Activated CD4-positive, alpha-beta memory T cell treated with anti-CD3 and anti-CD28 coated beads, Interleukin-2, amount 10 ng/mL, durations not matched to agents 7 days and 5 days (primary cell): ENCODE measurements at regions of chr11 and their contacts with region 1.

Region 1: DNA sequence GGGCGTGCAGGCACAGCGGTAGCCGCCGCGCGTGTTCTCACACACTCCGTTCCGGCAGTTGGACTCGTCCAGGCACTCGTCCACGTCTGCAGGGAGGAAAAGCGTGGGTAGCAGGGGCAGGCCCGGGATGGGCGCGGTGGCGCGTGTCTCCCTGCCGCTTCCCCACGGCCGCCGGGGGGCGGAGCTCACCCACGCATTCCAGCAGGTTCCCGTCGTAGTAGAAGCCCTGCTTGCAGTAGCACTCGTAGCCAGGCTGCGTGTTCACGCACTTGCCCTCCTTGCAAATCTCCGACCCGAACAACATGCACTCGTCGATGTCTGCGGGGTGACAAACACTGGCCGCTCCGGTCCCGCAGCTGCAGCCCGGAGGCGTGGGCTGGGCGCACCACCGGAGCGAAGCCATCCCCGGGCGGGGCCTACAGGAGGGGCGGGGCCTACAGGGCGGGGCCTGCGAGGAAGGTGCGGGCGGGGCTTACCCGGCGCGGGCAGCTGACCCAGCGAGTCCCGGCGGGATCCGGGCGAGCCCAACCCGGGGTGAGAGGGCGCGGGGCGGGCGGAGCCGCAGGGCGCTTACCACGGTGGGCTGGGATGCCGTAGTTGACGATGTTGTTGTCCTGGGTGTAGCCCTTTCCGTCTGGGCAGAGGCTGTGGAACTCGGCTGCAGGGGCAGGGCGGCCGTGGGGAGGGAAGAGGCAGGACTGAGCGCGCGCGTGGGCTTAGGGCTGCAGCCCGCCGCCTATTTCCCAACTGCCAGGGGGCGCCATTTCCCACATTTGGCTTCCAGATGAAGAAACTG is 15.6 kb downstream of the SCYL1 start:
- DNase-seq: peak; percentile 92
- H3K4me3 Mint-ChIP-seq: peak overlapping the region; percentile 80
- H3K27ac Mint-ChIP-seq: peak overlapping the region; percentile 74
- H3K4me1 Mint-ChIP-seq: peaks cover 30% of the 10 kb centered on the region
- H3K27me3 Mint-ChIP-seq: no peaks in the 10 kb centered on the region

Region 2: GRCh38 chr11:65530157-65530496 is 10.4 kb before region 1 on chr11:
- CTCF ChIA-PET with region 1: interaction called, 17 read pairs
- POLR2A ChIA-PET with region 1: interaction called, 26 read pairs
- DNase-seq: no peak
- H3K4me3 Mint-ChIP-seq: no peak overlapping the region
- H3K27ac Mint-ChIP-seq: peak overlapping the region; percentile 66
- H3K4me1 Mint-ChIP-seq: peaks cover 31% of the 10 kb centered on the region
- H3K27me3 Mint-ChIP-seq: no peaks in the 10 kb centered on the region

Region 3: GRCh38 chr11:65558002-65558931 is 17.8 kb after region 1 on chr11 and contains the start of gene LTBP3:
- CTCF ChIA-PET with region 1: interaction called, 41 read pairs
- POLR2A ChIA-PET with region 1: interaction called, 19 read pairs
- DNase-seq: no peak
- H3K4me3 Mint-ChIP-seq: peak within 1 kb of the TSS; percentile 74
- H3K27ac Mint-ChIP-seq: peak within 1 kb of the TSS; percentile 74
- H3K4me1 Mint-ChIP-seq: peaks cover 56% of the 10 kb centered on the region
- H3K27me3 Mint-ChIP-seq: no peaks in the 10 kb centered on the region
- total RNA-seq, gene LTBP3: 55.4 to 60.0 TPM

Region 4: GRCh38 chr11:65575568-65576231 is 35.2 kb after region 1 on chr11 and contains the start of gene EHBP1L1:
- CTCF ChIA-PET with region 1: interaction called, 88 read pairs
- POLR2A ChIA-PET with region 1: interaction called, 54 read pairs
- DNase-seq: peak; percentile 87
- H3K4me3 Mint-ChIP-seq: peak within 1 kb of the TSS; percentile 88
- H3K27ac Mint-ChIP-seq: peak within 1 kb of the TSS; percentile 97
- H3K4me1 Mint-ChIP-seq: peaks cover 57% of the 10 kb centered on the region
- H3K27me3 Mint-ChIP-seq: no peaks in the 10 kb centered on the region
- total RNA-seq, gene EHBP1L1: 118 to 119 TPM

Region 5: GRCh38 chr11:65593518-65594298 is 53.2 kb after region 1 on chr11:
- CTCF ChIA-PET with region 1: interaction called, 44 read pairs
- POLR2A ChIA-PET with region 1: interaction called, 17 read pairs
- DNase-seq: no peak
- H3K4me3 Mint-ChIP-seq: no peak overlapping the region
- H3K27ac Mint-ChIP-seq: peak overlapping the region; percentile 29
- H3K4me1 Mint-ChIP-seq: peaks cover 34% of the 10 kb centered on the region
- H3K27me3 Mint-ChIP-seq: no peaks in the 10 kb centered on the region